Activated B cell treated with CpG ODN at 0.5 μM for 24 hours (primary cell): ENCODE measurements at regions of chr2 and their contacts with region 1.

Region 1: DNA sequence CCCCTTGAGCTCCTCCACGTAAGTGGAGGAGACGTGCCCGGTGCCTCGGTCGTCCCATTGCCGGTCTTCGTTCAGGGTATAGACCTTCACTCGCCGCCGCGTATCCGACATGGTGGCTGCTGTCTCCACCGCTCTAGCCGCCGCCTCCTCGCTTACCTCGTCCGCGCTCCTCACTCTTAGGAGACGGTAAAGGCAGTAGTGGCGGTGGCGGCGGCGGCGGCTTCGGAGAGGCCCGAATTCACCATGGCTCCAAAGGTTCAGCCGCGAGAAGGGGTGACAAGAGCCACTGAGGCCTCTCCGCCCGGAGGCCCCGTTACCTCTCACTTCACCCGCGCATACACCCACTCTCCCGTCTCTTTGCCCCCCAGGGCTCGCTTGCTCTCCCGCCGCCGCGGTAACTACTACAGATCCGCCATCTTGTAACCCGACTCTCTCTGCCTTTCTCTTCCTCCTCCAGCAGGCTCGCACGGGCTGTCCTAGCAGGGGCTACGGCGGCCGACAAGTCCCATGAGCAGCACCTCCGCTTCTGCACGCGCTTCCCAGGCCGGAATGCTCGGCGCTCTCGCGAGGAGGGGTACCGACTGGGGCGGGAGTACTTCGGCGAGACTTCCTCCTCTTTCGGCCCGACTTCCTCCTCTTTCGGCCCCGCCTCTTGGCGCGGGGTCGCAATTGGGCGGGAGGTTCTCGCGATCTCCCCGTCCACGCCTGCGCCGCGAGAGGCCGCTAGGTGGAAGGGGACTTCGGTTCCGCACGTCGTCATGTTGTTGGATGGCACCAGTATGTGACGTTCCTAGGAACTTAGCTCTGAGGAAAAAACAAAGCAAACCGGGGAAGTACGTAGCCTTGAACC is at the start of gene PPP4R3B:
- DNase-seq: peak; percentile 96
- ATAC-seq: peak; percentile 81
- H3K4me3 Mint-ChIP-seq: no peak within 1 kb of the TSS
- H3K27ac Mint-ChIP-seq: no peak within 1 kb of the TSS
- H3K4me1 Mint-ChIP-seq: peaks cover 22% of the 10 kb centered on the region
- H3K27me3 Mint-ChIP-seq: no peaks in the 10 kb centered on the region
- CTCF ChIP-seq: no peak
- total RNA-seq, gene PPP4R3B: 75.6 and 82.4 TPM in 2 replicates

Region 2: DNA sequence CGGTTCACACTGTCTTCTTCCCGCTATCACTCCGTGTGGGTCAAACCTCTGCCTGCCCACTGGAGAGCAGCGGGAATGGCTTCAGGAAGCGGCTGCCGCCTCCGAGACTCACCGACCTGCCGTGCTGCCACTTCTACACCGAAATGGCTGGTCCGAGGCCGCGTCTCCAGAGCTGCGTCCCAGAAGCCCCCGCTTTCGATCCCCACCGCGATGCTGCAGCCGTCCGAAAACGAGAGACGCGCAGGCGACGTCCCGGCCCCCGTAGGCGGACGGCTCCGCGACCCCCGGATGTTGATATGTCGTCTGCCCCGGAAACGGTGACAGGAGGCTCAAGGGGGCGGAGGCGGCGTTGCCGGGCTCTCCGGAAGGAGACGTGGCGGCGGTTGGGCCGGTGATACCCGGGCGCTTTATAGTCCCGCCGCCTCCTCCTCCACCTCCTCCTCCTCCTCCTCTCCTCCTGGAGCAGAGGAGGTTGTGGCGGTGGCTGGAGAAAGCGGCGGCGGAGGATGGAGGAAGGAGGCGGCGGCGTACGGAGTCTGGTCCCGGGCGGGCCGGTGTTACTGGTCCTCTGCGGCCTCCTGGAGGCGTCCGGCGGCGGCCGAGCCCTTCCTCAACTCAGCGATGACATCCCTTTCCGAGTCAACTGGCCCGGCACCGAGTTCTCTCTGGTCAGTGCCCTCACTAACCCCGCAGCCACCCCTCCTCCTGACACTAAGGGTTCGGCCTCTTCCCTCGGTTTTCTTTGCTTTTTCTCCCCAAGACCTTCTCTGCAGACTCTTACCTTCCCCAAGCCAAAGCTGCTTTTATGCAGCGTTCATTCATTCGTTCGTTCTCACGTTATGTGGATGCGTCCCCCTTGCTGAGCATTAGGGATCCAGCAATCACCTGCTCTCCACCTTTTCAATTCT is 1830.4 kb before region 1 on chr2 and contains the starts of genes ASB3 and ERLEC1:
- CTCF ChIA-PET with region 1: no interaction called
- POLR2A ChIA-PET with region 1: no interaction called
- intact Hi-C with region 1: loop called (anchors 2 kb)
- DNase-seq: peak; percentile 82
- ATAC-seq: peak; percentile 93
- H3K4me3 Mint-ChIP-seq: peak within 1 kb of the TSS; percentile 91
- H3K27ac Mint-ChIP-seq: peak within 1 kb of the TSS; percentile 94
- H3K4me1 Mint-ChIP-seq: peaks cover 50% of the 10 kb centered on the region
- H3K27me3 Mint-ChIP-seq: no peaks in the 10 kb centered on the region
- CTCF ChIP-seq: no peak
- total RNA-seq, gene ASB3: 16.3 and 22.8 TPM in 2 replicates
- total RNA-seq, gene ERLEC1: 16.8 and 18.2 TPM in 2 replicates

Region 3: DNA sequence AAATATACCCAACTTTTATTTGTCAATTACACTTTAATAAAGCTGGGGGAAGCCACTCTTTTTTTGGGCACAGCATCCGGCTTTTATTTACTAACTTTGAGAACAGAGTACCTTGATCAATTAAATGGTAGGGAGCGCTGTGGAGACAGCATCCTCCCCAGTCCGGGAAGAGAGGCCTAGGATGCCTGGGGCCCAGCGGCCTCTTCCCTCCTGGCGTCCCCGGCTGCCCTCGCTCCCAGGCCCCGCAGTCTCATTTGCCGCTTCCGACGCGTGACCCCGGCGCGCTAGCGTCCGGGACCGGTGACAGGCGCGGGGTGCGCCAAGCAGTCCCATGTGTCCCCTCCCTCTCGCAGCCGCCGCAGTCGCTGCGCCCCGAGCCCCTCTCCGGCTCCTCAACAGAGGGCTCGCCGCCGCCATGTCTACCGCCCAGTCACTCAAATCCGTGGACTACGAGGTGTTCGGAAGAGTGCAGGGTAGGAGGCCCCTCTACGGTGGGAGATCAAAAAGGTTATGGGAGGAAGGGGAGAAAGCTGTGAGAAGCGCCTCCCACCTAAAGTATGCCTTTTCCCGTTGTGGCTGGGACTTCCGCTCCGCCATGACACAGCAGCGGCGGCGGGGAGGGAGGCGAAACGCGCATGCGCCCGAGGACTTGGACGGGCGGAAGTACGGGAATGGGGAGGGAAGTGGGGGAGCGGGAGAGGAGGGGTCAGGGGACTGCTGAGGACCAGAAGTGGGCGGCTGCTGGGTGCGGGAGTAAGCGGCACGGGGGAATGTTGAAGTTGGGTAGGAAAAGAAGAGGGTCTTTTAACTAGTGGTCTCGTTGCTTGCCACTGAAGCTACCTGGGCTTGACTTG is 1501.9 kb before region 1 on chr2 and contains the start of gene ACYP2:
- CTCF ChIA-PET with region 1: no interaction called
- POLR2A ChIA-PET with region 1: no interaction called
- intact Hi-C with region 1: loop called (anchors 2 kb)
- DNase-seq: peak; percentile 89
- ATAC-seq: peak; percentile 84
- H3K4me3 Mint-ChIP-seq: peak within 1 kb of the TSS; percentile 97
- H3K27ac Mint-ChIP-seq: peak within 1 kb of the TSS; percentile 100
- H3K4me1 Mint-ChIP-seq: peaks cover 26% of the 10 kb centered on the region
- H3K27me3 Mint-ChIP-seq: no peaks in the 10 kb centered on the region
- CTCF ChIP-seq: no peak
- total RNA-seq, gene ACYP2: 14.9 and 15.9 TPM in 2 replicates

Region 4: GRCh38 chr2:55014962-55015939 is 602.1 kb before region 1 on chr2:
- CTCF ChIA-PET with region 1: no interaction called
- POLR2A ChIA-PET with region 1: no interaction called
- intact Hi-C with region 1: no loop called
- DNase-seq: no peak
- ATAC-seq: no peak
- H3K4me3 Mint-ChIP-seq: no peak overlapping the region
- H3K27ac Mint-ChIP-seq: no peak overlapping the region
- H3K4me1 Mint-ChIP-seq: peaks cover 52% of the 10 kb centered on the region
- H3K27me3 Mint-ChIP-seq: no peaks in the 10 kb centered on the region
- CTCF ChIP-seq: peak; percentile 49

Region 5: DNA sequence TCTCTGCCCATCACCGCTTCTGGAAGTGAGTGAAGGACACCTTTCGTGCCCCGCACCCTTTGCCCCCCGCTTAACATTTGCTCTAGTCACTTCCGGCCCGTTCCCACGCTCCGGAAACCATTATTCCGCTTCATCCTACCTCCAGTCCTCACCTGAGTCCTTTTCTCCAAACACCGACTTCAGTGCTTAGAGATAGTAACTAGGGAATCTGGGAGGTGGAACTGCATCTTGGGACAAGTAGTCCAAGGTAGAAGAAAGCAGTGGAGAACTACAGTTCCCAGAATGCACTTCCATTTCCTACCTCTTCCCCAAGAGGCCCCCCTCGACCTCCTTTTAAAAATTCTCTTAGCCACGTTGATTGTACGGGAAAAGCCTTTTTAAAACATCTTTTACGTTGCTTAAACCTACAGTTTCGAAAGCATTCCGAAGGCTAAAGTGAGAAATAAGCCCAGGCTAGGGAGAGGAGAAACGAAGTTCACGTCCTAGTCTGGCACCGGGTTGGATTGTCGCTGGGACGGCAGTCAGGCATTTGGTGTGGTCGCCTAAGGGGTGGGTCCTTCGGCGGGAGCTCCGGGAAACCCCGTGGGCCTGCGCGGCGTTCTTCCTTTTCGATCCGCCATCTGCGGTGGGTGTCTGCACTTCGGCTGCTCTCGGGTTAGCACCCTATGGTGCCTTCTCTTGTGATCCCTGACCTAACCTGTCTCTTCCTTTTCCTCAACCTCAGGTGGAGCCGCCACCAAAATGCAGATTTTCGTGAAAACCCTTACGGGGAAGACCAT is 385.1 kb before region 1 on chr2 and contains the starts of genes CLHC1 and RPS27A:
- CTCF ChIA-PET with region 1: no interaction called
- POLR2A ChIA-PET with region 1: interaction called, 9 read pairs
- intact Hi-C with region 1: loop called (anchors 1 kb)
- DNase-seq: peak; percentile 92
- ATAC-seq: peak; percentile 86
- H3K4me3 Mint-ChIP-seq: peak within 1 kb of the TSS; percentile 99
- H3K27ac Mint-ChIP-seq: peak within 1 kb of the TSS; percentile 98
- H3K4me1 Mint-ChIP-seq: peaks cover 58% of the 10 kb centered on the region
- H3K27me3 Mint-ChIP-seq: no peaks in the 10 kb centered on the region
- CTCF ChIP-seq: no peak
- total RNA-seq, gene CLHC1: 7.1 and 10.5 TPM in 2 replicates
- total RNA-seq, gene RPS27A: 1,833 and 2,316 TPM in 2 replicates

Region 6: GRCh38 chr2:55242617-55243016 is 374.8 kb before region 1 on chr2:
- CTCF ChIA-PET with region 1: no interaction called
- POLR2A ChIA-PET with region 1: no interaction called
- intact Hi-C with region 1: no loop called
- DNase-seq: no peak
- ATAC-seq: no peak
- H3K4me3 Mint-ChIP-seq: no peak overlapping the region
- H3K27ac Mint-ChIP-seq: no peak overlapping the region
- H3K4me1 Mint-ChIP-seq: no peaks in the 10 kb centered on the region
- H3K27me3 Mint-ChIP-seq: no peaks in the 10 kb centered on the region
- CTCF ChIP-seq: no peak

Region 7: DNA sequence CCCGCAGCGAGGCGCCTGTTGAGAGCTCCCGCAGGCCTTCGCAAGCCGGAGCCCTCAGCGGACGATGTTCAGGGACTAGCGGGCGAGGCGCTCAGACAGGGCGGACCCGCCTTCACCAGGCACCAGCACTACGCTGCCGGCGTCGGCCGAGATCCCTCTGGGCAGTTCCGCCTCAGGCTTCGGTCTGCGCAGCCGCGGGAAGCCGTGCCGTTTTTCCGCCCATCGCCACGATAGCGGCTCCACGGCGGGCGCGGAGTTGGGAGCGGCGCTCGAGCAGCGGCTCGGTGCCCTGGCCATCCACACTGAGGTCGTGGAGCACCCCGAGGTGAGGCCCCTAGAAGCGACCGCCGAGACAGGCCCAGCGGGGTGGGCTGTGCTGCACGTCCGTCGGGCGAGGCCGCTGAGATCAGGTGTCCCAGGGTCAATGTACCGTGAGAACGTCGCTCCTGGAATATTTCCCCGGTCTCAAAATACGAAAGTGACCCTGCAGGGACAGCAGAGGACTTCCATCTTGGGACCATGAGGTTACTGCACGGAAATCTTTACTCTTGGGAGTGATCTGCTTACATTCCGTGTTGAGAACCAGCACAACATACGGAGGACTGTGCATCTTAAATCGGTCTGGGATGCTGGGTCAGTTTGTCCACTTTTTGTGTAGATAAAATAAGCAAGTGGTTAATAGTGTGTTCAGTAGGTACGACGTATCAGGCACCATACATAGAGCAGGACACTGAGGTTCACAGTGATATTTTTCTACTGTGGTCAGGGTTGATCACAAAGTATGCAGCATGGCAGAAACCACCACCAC is 335.1 kb before region 1 on chr2:
- CTCF ChIA-PET with region 1: no interaction called
- POLR2A ChIA-PET with region 1: no interaction called
- intact Hi-C with region 1: loop called (anchors 5 kb)
- DNase-seq: peak; percentile 83
- ATAC-seq: peak; percentile 99
- H3K4me3 Mint-ChIP-seq: peak overlapping the region; percentile 88
- H3K27ac Mint-ChIP-seq: peak overlapping the region; percentile 93
- H3K4me1 Mint-ChIP-seq: peaks cover 28% of the 10 kb centered on the region
- H3K27me3 Mint-ChIP-seq: no peaks in the 10 kb centered on the region
- CTCF ChIP-seq: no peak

Region 8: DNA sequence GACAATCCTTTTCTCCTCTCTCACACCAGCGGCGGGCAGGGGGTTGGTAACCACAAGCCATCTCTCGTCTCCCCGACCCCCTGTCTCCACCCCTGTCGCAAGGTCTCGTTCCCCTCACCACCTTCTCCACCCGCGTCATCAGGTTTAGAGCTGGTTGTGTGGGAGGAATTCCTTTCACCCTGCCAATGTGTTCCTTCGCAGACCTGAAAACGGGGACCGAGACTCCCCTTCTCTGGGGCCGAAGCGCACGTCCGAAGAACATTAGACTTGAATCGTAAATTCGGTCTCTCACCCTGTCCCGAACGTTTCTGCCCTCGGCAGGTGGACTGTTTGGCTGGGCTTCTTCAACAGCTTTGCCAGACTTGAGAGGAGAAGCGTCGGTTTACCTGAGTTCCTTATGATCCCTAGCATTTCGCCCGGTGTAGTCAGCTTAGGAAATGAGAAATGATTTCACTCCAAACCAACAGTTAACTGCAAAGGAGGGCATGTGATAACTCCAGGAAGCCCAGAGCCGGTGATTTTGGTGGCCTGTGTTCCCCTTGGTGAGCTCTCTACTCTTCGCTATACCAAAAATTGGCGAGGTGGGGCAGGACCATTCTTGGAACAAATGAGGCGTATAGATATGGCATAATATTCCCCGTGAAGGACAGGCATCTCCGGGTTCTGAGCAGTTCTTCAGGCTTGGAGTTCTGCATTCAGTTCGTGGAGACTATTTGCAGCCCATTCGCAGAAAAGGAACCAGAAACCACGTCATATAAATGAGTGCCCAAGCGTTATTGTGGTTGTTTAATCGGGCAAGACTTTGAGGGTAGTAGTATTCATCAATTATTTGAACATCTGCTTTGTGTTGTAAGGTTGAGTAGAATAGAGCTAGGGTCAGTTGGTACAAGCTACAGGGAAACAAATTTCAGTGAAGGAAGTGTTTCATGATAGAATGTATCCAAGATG is 97.2 kb before region 1 on chr2:
- CTCF ChIA-PET with region 1: no interaction called
- POLR2A ChIA-PET with region 1: interaction called, 43 read pairs
- intact Hi-C with region 1: loop called (anchors 1 kb)
- DNase-seq: peak; percentile 17
- ATAC-seq: peak; percentile 10
- H3K4me3 Mint-ChIP-seq: peak overlapping the region; percentile 98
- H3K27ac Mint-ChIP-seq: peak overlapping the region; percentile 96
- H3K4me1 Mint-ChIP-seq: peaks cover 16% of the 10 kb centered on the region
- H3K27me3 Mint-ChIP-seq: no peaks in the 10 kb centered on the region
- CTCF ChIP-seq: no peak

Region 9: GRCh38 chr2:55809875-55810621 is 192.6 kb after region 1 on chr2:
- CTCF ChIA-PET with region 1: no interaction called
- POLR2A ChIA-PET with region 1: no interaction called
- intact Hi-C with region 1: no loop called
- DNase-seq: no peak
- ATAC-seq: no peak
- H3K4me3 Mint-ChIP-seq: no peak overlapping the region
- H3K27ac Mint-ChIP-seq: no peak overlapping the region
- H3K4me1 Mint-ChIP-seq: no peaks in the 10 kb centered on the region
- H3K27me3 Mint-ChIP-seq: peaks cover 2% of the 10 kb centered on the region
- CTCF ChIP-seq: no peak

Region 10: GRCh38 chr2:56313500-56313921 is 696.1 kb after region 1 on chr2:
- CTCF ChIA-PET with region 1: no interaction called
- POLR2A ChIA-PET with region 1: no interaction called
- intact Hi-C with region 1: no loop called
- DNase-seq: no peak
- ATAC-seq: no peak
- H3K4me3 Mint-ChIP-seq: no peak overlapping the region
- H3K27ac Mint-ChIP-seq: no peak overlapping the region
- H3K4me1 Mint-ChIP-seq: no peaks in the 10 kb centered on the region
- H3K27me3 Mint-ChIP-seq: no peaks in the 10 kb centered on the region
- CTCF ChIP-seq: no peak